H1 (cell line): ENCODE measurements at regions of chr20 and their contacts with region 1.

Region 1: GRCh38 chr20:872855-873521 is 39.5 kb downstream of the FAM110A start:
- DNase-seq: peak; percentile 23 to 71
- H3K4me3 ChIP-seq: no peak overlapping the region
- H3K27ac ChIP-seq: no peak overlapping the region
- H3K4me1 ChIP-seq: peaks cover 0 to 4% (median 0%) of the 10 kb centered on the region in 4 experiments; a peak in 3 of 7 replicates
- H3K27me3 ChIP-seq: no peaks in the 10 kb centered on the region; a peak in 2 of 7 replicates
- CTCF ChIP-seq: peak; percentile 61 to 68 (median 67)
- EP300 ChIP-seq: no peak
- POLR2A ChIP-seq: no peak
- RAD21 ChIP-seq: peak; percentile 40 to 64

Region 2: DNA sequence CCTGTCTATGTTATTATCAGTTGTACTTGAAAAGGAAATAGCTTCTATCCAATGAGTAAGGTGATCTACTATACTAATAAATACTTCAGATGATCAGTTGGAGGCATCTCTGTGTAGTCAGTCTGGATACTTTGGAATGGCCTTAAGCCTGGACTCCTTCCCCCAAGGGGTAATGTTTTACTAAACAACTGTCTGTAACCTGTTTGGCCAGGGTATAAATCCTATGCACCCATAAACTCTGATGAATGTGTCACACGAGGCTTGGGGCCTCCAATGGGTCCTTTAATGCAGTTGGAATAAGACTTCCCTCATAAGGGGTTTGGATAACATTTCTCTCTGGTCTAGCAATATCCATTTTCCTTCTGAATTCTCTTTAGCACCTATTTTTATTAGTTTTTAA is 85.2 kb before region 1 on chr20:
- CTCF ChIA-PET with region 1: no interaction called
- POLR2A ChIA-PET with region 1: no interaction called
- DNase-seq: no peak
- H3K4me3 ChIP-seq: no peak overlapping the region
- H3K27ac ChIP-seq: no peak overlapping the region
- H3K4me1 ChIP-seq: no peaks in the 10 kb centered on the region; a peak in 1 of 7 replicates
- H3K27me3 ChIP-seq: no peaks in the 10 kb centered on the region
- CTCF ChIP-seq: no peak
- EP300 ChIP-seq: no peak
- POLR2A ChIP-seq: no peak
- RAD21 ChIP-seq: no peak

Region 3: GRCh38 chr20:856361-857040 is 16.5 kb before region 1 on chr20:
- CTCF ChIA-PET with region 1: interaction called, 29 read pairs
- POLR2A ChIA-PET with region 1: no interaction called
- DNase-seq: no peak
- H3K4me3 ChIP-seq: no peak overlapping the region
- H3K27ac ChIP-seq: no peak overlapping the region
- H3K4me1 ChIP-seq: peaks cover 0 to 3% (median 1%) of the 10 kb centered on the region in 4 experiments; a peak in 3 of 7 replicates
- H3K27me3 ChIP-seq: no peaks in the 10 kb centered on the region; a peak in 1 of 7 replicates
- CTCF ChIP-seq: no peak
- EP300 ChIP-seq: no peak
- POLR2A ChIP-seq: no peak
- RAD21 ChIP-seq: no peak

Region 4: GRCh38 chr20:884983-885952 is 12.3 kb after region 1 on chr20:
- CTCF ChIA-PET with region 1: interaction called, 75 read pairs
- POLR2A ChIA-PET with region 1: no interaction called
- DNase-seq: peak; percentile 82 to 91
- H3K4me3 ChIP-seq: peak overlapping the region in 1 of 4 experiments; percentile 32; a peak in 1 of 8 replicates
- H3K27ac ChIP-seq: no peak overlapping the region
- H3K4me1 ChIP-seq: peaks cover 0 to 6% (median 0%) of the 10 kb centered on the region in 4 experiments; a peak in 3 of 7 replicates
- H3K27me3 ChIP-seq: peaks cover 0 to 5% (median 3%) of the 10 kb centered on the region in 4 experiments; a peak in 6 of 7 replicates
- CTCF ChIP-seq: peak; percentile 74 to 98 (median 78)
- EP300 ChIP-seq: no peak
- POLR2A ChIP-seq: no peak
- RAD21 ChIP-seq: peak; percentile 90 to 93

Region 5: DNA sequence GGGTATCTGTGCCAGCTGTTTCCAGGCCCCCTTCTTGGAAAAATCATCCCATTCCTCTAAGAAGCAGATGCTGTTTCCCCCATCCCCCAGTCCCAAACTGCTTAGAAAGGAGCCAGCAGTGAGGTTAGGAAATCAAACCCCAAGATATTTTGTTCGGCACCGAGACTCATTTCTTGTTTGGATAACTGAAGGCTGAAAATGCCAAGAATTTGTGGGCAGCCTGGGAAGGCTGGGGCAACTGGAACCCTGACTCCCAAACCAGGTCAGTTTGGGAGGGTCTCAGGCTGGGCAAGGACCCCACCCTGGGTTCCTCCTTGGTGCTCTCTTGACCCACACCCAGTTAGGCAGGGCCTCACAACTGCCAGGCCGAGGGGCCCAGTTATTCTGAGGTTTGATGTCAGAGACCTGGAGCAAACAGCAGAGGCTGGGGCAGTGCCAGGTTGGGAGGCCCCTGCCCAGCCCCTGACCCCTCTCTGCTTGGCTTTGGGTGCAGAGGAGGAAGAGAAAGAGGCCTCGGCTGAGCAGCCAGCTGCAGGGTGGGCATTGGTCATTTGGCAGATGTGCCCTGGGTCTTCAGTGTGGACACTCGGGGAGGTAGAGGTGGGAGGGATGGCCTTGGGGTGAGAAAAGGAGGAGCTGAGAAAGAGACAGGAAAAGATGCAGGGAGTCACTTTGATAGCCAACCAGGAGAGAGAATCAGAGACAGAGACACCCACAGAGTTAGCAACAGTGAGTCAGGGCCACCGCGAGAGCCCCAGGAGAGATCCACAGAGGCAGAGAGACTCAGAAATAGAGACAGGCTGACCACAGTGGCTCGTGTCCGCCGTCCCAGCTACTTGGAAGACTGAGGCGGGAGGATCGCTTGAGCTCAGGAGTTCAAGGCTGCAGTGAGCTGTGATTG is 38.1 kb after region 1 on chr20:
- CTCF ChIA-PET with region 1: interaction called, 12 read pairs
- POLR2A ChIA-PET with region 1: no interaction called
- DNase-seq: no peak
- H3K4me3 ChIP-seq: no peak overlapping the region
- H3K27ac ChIP-seq: no peak overlapping the region
- H3K4me1 ChIP-seq: peaks cover 0 to 6% (median 3%) of the 10 kb centered on the region in 4 experiments; a peak in 4 of 7 replicates
- H3K27me3 ChIP-seq: no peaks in the 10 kb centered on the region
- CTCF ChIP-seq: no peak
- EP300 ChIP-seq: no peak
- POLR2A ChIP-seq: no peak
- RAD21 ChIP-seq: no peak